WTC11 (cell line): ENCODE measurements at regions of chr15 and their contacts with region 1.

Region 1: GRCh38 chr15:67622110-67622509 is 79.6 kb downstream of the MAP2K5 start:
- DNase-seq: no peak
- ATAC-seq: no peak
- H3K4me3 Mint-ChIP-seq: no peak overlapping the region
- H3K27ac Mint-ChIP-seq: no peak overlapping the region
- H3K4me1 Mint-ChIP-seq: no peaks in the 10 kb centered on the region
- H3K27me3 Mint-ChIP-seq: no peaks in the 10 kb centered on the region
- CTCF ChIP-seq: no peak

Region 2: GRCh38 chr15:67601073-67601472 is 21.0 kb before region 1 on chr15:
- CTCF ChIA-PET with region 1: no interaction called
- POLR2A ChIA-PET with region 1: interaction called, 12 read pairs
- DNase-seq: no peak
- ATAC-seq: no peak
- H3K4me3 Mint-ChIP-seq: no peak overlapping the region
- H3K27ac Mint-ChIP-seq: no peak overlapping the region
- H3K4me1 Mint-ChIP-seq: peaks cover 6% of the 10 kb centered on the region
- H3K27me3 Mint-ChIP-seq: no peaks in the 10 kb centered on the region
- CTCF ChIP-seq: no peak

Region 3: GRCh38 chr15:67700023-67700422 is 77.9 kb after region 1 on chr15:
- CTCF ChIA-PET with region 1: no interaction called
- POLR2A ChIA-PET with region 1: no interaction called
- DNase-seq: no peak
- ATAC-seq: no peak
- H3K4me3 Mint-ChIP-seq: no peak overlapping the region
- H3K27ac Mint-ChIP-seq: no peak overlapping the region
- H3K4me1 Mint-ChIP-seq: no peaks in the 10 kb centered on the region
- H3K27me3 Mint-ChIP-seq: no peaks in the 10 kb centered on the region; the same call in 1 of the 2 replicates
- CTCF ChIP-seq: no peak

Region 4: DNA sequence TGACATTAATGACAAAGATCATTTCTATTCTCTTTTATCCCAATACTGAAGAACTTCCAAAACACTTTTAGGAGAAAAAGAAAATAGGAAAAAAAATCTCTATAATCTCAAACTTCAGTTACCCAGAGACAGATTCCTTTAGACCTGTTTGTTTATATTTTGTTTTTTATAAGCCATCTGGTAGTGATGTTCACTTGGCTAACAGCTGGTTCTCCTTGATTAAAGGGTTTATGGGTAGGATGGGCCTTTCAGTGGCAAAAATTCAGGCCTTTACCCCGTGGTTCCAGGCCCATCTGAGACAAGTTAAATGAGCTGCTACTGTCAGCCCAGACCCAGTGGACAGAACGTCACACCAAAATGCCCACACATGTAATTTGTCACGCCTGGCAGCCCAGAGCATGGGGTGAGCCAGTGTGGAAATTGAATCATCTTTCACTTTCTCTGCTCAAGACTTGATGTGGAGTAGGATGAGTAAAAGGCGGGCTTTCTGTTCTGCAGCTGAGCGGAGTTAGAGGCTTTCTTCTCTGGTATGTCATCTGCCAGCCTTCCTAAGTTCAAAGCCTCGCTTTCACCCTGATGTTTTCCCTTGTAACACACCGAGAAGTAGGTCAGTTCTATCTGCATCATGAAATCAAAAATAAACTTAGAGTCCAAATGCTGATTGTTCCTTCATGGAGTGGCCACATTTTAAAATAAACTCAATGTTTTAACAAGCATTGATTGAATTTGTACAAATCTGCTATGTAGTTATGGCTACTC is 140.7 kb after region 1 on chr15:
- CTCF ChIA-PET with region 1: no interaction called
- POLR2A ChIA-PET with region 1: no interaction called
- DNase-seq: no peak
- ATAC-seq: no peak
- H3K4me3 Mint-ChIP-seq: no peak overlapping the region
- H3K27ac Mint-ChIP-seq: no peak overlapping the region
- H3K4me1 Mint-ChIP-seq: peaks cover 21% of the 10 kb centered on the region
- H3K27me3 Mint-ChIP-seq: no peaks in the 10 kb centered on the region
- CTCF ChIP-seq: no peak